ENCODE measurements at regions of chr2 and their contacts with region 1.

Region 1: DNA sequence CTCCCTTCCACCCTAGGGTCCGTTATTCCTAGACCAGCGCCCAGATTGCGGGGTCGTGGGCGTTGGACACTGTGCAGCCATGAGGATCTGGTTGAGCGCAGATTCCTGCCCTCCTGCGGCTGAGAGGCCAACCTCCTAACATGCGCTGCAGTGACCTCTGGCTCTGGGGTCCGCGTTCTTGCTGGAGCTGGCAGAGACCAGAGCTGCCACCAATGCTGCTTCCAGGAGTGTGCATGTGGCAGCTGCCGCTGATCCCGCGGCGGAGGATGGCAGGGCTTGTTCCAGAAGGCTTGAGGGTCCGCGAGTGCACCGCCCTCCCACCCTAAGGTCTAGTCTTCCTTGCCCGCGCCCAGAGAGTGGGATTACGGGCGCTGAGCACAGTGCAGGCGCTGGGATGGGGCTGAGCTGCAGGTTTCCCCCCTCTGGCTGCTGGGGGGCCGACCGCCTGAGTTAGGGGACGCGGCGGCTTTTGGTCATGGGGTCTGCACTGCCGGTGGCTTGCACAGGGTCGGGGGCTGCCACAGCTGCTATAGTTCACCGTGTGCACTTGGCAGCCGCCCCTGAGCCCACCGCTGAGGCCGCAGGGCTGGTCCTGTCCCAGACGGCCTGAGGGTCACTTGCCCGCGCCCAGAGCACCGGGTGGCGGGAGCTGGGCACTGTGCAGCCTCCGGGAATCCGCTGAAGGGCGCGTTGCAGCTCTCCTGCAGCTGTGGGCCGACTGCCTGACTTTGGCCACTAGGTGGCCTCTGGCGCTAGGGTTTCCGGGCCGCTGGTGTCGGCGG is 145.9 kb downstream of the CCDC74A start:
- DNase-seq: no peak
- H3K4me3 ChIP-seq: peak overlapping the region; percentile 12
- H3K27me3 ChIP-seq: no peaks in the 10 kb centered on the region
- CTCF ChIP-seq: peak; percentile 87

Region 2: GRCh38 chr2:131154071-131154531 is 519.5 kb before region 1 on chr2:
- CTCF ChIA-PET with region 1: interaction called, 29 read pairs
- POLR2A ChIA-PET with region 1: no interaction called
- DNase-seq: no peak
- H3K4me3 ChIP-seq: no peak overlapping the region
- H3K27me3 ChIP-seq: no peaks in the 10 kb centered on the region
- CTCF ChIP-seq: peak; percentile 88

Region 3: GRCh38 chr2:131408207-131408606 is 265.4 kb before region 1 on chr2:
- CTCF ChIA-PET with region 1: interaction called, 58 read pairs
- POLR2A ChIA-PET with region 1: no interaction called
- DNase-seq: no peak
- H3K4me3 ChIP-seq: no peak overlapping the region
- H3K27me3 ChIP-seq: peaks cover 6% of the 10 kb centered on the region
- CTCF ChIP-seq: no peak

Region 4: DNA sequence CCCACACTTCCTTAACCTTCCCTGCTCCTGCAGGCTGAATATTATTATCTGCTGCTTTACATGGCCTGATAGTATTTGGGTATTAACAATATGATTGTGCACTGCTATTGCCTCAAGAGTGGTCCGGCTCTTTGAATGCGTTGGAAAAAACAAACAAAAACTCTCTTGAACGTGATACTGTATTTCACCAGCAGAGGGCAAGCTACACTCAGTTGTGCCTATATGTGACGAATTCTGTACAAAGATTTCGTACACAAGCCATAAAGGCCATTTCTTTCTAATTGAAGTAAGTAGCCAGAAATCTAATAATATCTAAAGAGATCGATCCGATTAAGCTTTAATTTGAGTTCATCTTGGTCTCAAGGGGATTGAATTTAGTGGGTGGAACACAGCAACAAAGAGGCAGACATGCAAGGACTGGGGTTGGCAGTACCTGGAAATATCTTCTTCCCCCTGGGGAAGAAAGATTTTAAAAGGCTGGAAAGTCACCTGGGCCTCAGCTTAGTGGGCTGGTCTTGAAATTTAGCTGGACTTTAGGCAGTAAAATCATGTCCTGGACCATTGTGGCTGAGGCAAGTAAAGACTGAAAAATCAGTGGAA is 260.3 kb before region 1 on chr2:
- CTCF ChIA-PET with region 1: interaction called, 58 read pairs
- POLR2A ChIA-PET with region 1: no interaction called
- DNase-seq: no peak
- H3K4me3 ChIP-seq: no peak overlapping the region
- H3K27me3 ChIP-seq: peaks cover 2% of the 10 kb centered on the region; the same call in 1 of the 2 replicates
- CTCF ChIP-seq: peak; percentile 68

Region 5: GRCh38 chr2:131492418-131493198 is 181.0 kb before region 1 on chr2:
- CTCF ChIA-PET with region 1: interaction called, 15 read pairs
- POLR2A ChIA-PET with region 1: no interaction called
- DNase-seq: peak; percentile 34
- H3K4me3 ChIP-seq: peak overlapping the region; percentile 95
- H3K27me3 ChIP-seq: no peaks in the 10 kb centered on the region
- CTCF ChIP-seq: peak; percentile 89

Region 6: DNA sequence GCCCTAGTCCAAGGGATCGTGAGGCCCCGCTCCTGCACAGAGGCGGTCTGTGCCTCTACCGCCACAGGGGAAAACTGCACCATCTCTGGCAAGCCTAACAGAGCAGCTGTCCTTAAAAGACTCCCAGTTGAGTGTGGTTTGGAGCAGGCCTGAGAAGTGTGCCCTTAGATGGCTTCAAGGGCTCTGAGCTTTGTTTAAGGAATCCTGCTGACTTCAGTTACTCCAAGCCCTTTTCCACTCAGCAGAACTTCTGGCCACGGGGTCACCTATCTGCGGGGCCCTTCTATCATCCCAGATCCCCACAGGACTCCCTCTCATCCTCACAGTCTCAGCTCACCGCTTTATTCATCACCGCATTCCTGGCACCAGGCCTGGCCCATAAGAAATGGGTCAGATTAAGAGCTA is 14.4 kb before region 1 on chr2:
- CTCF ChIA-PET with region 1: interaction called, 11 read pairs
- POLR2A ChIA-PET with region 1: no interaction called
- DNase-seq: no peak
- H3K4me3 ChIP-seq: no peak overlapping the region
- H3K27me3 ChIP-seq: no peaks in the 10 kb centered on the region
- CTCF ChIP-seq: no peak

Region 7: DNA sequence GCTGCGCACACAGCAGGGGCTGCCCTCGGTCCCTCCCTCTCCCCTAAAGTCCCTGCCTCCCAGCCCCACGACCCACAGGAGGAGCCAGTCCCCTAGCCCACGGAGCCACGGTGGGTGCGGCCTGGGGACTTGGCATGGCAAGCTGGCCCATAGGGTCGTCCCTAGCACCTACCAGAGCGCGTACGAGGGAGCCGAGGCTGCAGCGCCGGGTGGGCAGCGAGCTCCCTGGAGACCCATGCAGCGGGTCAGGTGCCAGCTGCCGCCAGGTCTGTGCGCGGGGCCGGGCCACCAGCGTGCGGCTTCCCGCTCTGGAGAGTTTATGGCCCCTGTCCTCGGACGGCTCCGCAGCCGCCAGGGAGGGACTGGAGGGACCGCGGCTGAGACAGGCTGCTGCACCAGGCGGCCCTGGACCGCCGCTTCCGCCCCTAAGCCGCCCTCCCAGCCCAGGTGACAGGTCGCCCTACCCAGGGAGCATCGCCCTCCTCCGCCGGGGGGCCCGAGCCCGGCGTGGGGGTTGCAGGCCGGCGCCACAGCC is 127.7 kb after region 1 on chr2:
- CTCF ChIA-PET with region 1: interaction called, 41 read pairs
- POLR2A ChIA-PET with region 1: interaction called, 3 read pairs
- DNase-seq: no peak
- H3K4me3 ChIP-seq: no peak overlapping the region
- H3K27me3 ChIP-seq: no peaks in the 10 kb centered on the region
- CTCF ChIP-seq: no peak

Region 8: DNA sequence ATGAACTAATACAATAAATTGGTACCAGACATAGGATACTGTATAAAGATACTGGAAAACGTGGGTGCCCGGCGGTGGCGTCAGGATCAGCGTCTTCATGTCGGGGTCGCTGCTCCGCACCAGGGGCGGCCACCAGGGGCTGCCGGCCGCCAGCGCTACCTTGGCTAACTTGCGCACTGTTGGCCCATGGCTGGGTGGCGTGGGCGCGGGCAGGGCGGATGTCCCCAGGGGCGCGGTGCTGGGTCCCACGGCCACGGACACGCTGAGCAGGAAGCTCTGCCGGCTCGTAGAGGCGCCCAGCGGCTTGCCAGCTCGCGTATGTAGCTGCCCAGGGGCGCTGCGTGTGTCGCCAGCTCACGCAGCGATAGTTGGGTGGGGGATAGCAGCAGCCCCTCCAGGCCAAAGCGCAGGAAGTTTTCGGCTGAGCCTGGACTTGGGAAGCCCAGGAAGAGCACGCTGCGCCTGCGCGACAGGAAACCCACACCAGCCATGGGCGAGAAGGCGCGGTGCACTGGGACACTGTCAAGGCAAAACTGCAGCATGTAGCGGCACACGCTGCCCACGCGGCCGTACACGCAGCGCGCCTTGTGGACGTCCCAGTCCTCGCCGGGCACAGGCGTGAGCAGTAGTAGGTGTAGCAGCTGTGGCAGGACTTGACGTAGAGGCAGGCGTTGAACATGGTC is 154.0 kb after region 1 on chr2:
- CTCF ChIA-PET with region 1: no interaction called
- POLR2A ChIA-PET with region 1: no interaction called
- DNase-seq: no peak
- H3K4me3 ChIP-seq: no peak overlapping the region
- H3K27me3 ChIP-seq: no peaks in the 10 kb centered on the region
- CTCF ChIP-seq: no peak

Measured in BJ (cell line).